CD4-positive, alpha-beta T cell (primary cell): ENCODE measurements at regions of chr7 and their contacts with region 1.

Region 1: GRCh38 chr7:18508443-18509427 is 13.2 kb downstream of the HDAC9 start:
- DNase-seq: peak in 2 of 14 experiments; percentile 37 to 52
- ATAC-seq: no peak
- H3K4me3 ChIP-seq: no peak overlapping the region
- H3K4me3 Mint-ChIP-seq: no peak overlapping the region
- H3K27ac ChIP-seq: no peak overlapping the region
- H3K27ac Mint-ChIP-seq: no peak overlapping the region
- H3K4me1 ChIP-seq: no peaks in the 10 kb centered on the region
- H3K4me1 Mint-ChIP-seq: no peaks in the 10 kb centered on the region
- H3K27me3 ChIP-seq: no peaks in the 10 kb centered on the region
- H3K27me3 Mint-ChIP-seq: no peaks in the 10 kb centered on the region
- CTCF ChIP-seq: no peak

Region 2: DNA sequence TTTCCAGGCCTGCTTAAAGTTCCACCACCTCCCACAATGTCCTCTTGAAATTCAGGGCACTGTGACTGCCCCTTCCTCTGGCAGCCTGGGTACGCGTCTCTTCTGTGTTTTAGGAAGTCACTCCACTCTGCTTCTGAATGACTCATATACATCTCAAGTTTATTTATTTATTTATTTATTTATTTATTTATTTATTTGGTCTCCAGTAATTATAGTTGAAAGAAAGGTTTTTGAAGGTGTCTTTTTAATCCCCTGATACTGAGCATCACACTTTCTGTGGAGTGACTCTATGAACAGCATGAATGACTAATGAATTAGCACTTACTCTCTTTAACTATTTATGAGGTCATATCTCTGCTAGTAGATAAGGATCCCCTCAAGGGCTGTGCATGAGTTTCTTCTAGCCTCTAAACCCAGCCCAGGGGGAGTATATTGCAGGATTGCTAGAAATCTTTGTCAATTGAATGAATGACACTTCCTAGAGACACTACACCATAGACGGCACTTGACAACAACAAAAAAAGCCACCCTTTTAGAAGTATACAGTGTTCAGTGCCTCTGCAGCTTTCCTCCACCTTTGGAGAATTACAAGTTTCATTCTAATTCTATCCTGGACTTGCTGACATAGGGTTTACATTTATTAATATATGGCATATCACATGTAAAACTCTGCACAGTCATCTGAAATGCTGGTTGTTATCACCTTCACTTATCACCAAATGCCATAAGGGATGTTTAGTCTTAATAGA is 1706.4 kb after region 1 on chr7:
- CTCF ChIA-PET with region 1: no interaction called
- POLR2A ChIA-PET with region 1: no interaction called
- intact Hi-C with region 1: loop called in 1 of 2 experiments (anchors 5 kb)
- DNase-seq: peak in 1 of 14 experiments; percentile 17
- ATAC-seq: no peak
- H3K4me3 ChIP-seq: no peak overlapping the region
- H3K4me3 Mint-ChIP-seq: no peak overlapping the region
- H3K27ac ChIP-seq: no peak overlapping the region
- H3K27ac Mint-ChIP-seq: no peak overlapping the region
- H3K4me1 ChIP-seq: no peaks in the 10 kb centered on the region
- H3K4me1 Mint-ChIP-seq: peaks cover 14% of the 10 kb centered on the region
- H3K27me3 ChIP-seq: no peaks in the 10 kb centered on the region
- H3K27me3 Mint-ChIP-seq: no peaks in the 10 kb centered on the region
- CTCF ChIP-seq: no peak